ENCODE measurements at regions of chr4 and their contacts with region 1.

Region 1: DNA sequence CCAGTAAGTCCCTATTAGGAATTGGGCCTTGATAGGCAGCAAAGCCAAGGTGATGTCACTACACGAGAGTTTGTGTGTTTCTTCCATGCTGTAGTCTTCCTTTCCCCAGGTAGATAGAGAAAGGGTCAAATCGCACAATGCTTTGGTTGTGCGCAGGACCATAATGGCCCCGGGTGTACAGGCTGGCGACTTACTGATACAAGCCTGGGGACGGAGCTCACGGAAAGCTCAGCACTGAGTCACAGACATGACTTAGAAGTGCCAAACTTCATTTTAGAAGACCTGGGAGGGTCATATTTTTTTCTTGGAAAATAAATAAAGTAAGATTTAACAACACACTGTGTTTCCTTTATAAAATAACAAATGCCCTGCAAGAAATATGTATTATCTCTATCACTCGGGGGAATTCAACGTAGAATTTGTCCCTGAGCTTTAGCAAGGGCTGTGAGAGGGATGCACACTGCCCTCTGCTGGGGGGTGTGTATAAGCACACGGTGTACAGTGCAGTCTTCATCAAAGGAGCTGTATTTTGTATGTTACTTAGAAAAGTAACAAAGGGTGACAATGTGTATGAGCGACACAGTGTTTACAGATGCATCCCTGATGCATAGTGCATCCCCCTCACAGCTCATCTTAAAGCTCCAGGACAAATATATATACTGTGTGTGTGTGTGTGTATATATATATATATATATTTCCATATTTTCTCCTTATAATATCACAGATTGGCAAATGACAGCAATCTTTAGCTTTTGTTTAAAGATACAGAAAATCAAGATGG is 254.5 kb upstream of the VEGFC start:
- DNase-seq: peak; percentile 57 to 87
- H3K4me3 ChIP-seq: no peak overlapping the region
- H3K4me1 ChIP-seq: peaks cover 5% of the 10 kb centered on the region
- H3K27me3 ChIP-seq: peaks cover 30% of the 10 kb centered on the region

Region 2: GRCh38 chr4:176789955-176790354 is 257.3 kb before region 1 on chr4:
- in situ Hi-C with region 1: loop called (anchors 25 kb)
- DNase-seq: peak; percentile 29 to 64
- H3K4me3 ChIP-seq: no peak overlapping the region
- H3K4me1 ChIP-seq: peaks cover 8% of the 10 kb centered on the region
- H3K27me3 ChIP-seq: no peaks in the 10 kb centered on the region

Region 3: GRCh38 chr4:176856421-176856820 is 190.8 kb before region 1 on chr4:
- in situ Hi-C with region 1: no loop called
- DNase-seq: peak; percentile 18 to 83
- H3K4me3 ChIP-seq: no peak overlapping the region
- H3K4me1 ChIP-seq: peaks cover 3% of the 10 kb centered on the region; the same call in 1 of the 2 replicates
- H3K27me3 ChIP-seq: no peaks in the 10 kb centered on the region

Region 4: GRCh38 chr4:177339477-177340374 is 292.5 kb after region 1 on chr4:
- in situ Hi-C with region 1: loop called (anchors 25 kb)
- DNase-seq: peak in 1 of 2 experiments; percentile 29
- H3K4me3 ChIP-seq: no peak overlapping the region
- H3K4me1 ChIP-seq: peaks cover 14% of the 10 kb centered on the region
- H3K27me3 ChIP-seq: no peaks in the 10 kb centered on the region

Region 5: DNA sequence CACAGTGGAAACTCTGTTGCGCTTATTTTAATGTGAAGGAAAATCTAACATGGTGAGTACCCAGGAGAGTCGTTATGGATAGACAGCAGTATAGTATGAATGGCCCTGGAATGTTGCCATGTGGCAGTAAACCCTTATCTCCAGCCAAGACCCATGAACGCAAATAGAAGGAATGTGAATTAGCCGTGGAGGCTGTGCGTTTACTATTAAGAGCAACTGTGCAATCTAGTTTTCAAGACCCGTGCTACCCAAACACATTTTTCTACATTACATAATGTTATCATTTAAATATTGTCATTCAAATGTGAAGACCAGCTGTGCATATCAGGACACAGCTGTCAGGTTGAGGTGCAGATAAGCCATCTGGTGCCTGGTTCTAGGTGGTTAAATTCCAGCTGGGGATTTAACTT is 408.3 kb after region 1 on chr4:
- in situ Hi-C with region 1: no loop called
- DNase-seq: no peak
- H3K4me3 ChIP-seq: no peak overlapping the region
- H3K4me1 ChIP-seq: no peaks in the 10 kb centered on the region
- H3K27me3 ChIP-seq: no peaks in the 10 kb centered on the region

Measured in HAP-1 (cell line).